Motor neuron (in vitro differentiated cells): ENCODE measurements at regions of chr10 and their contacts with region 1.

Region 1: GRCh38 chr10:97196223-97197029 is 10.7 kb upstream of the SLIT1 start:
- ATAC-seq: peak; percentile 73 to 93 (median 86)
- H3K4me3 ChIP-seq: peak overlapping the region; percentile 21 to 32 (median 26)
- H3K27ac ChIP-seq: peak overlapping the region in 1 of 2 donors; percentile 22
- H3K4me1 ChIP-seq: peaks cover 3 to 12% of the 10 kb centered on the region in 2 donors

Region 2: DNA sequence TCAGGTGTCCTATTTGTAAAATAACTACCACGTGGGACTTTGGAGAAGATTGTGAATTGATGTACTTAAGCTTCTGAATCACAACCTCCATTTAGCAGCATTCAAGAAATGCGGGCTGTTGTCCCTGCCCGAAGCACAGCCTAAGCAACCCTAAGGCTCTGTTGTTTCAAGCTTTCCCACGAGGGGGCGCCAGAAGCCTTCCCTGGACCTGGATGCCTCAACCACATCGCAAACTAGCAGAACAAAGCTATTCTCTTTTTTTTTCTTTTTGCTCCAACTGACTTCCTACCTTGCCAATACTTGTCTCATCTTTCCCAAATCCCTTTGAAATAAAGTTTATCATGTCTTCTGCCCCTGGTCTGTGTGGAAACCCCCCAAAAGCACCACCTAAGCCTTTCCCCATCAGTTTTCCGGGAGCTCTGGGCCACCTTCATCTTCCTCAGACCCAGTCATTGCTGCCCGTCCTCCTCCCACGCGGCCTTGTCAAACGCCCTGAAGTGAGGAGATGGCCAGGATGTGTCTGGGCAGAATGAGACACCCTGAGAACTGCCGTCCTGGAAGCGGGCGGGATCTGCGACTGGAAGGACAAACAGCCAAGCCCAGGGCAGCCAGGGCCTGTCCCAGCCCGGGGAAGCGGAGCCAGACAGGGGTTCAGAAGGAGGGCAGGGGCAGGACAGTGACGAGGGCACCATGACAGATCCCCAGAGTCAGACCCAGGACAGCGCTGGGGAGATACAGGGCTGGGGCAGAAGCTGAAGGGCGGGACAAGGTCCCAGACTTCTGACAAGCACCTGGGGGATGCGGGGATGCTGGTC is 123.4 kb before region 1 on chr10:
- in situ Hi-C with region 1: loop called in 7 of 9 experiments (anchors 10 to 25 kb)
- ATAC-seq: peak; percentile 77 to 96 (median 87)
- H3K4me3 ChIP-seq: no peak overlapping the region
- H3K27ac ChIP-seq: no peak overlapping the region
- H3K4me1 ChIP-seq: peaks cover 26 to 35% of the 10 kb centered on the region in 2 donors

Region 3: DNA sequence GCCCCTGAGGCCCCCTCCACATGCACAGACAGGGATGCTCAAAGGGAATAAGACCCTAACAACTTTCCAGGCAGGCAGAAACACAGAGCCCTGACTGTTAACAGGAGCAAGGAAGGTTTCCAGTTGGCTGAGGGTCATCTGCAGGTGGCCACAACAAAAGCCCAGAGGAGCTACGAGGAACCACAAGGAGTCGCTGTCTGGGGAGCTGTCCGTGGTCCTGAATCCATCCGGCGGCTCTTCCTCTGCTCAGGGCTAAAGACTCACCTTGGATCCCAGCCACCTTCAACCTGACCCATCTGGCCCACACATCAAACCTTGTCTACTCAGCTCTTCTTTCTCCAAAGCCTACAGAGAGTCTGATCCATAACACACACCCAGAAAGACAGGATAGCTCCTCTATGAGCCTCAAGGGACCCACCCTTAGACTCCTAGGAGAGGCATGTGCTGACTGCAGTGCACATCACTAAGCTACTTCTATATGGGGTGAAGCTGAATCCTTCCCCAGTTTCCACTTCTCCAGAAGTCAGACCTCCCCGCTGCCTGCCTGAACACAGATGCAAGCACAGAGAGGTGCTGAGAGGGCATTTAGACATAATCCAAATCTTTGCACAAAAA is 114.7 kb before region 1 on chr10:
- in situ Hi-C with region 1: loop called in 6 of 9 experiments (anchors 10 to 25 kb)
- ATAC-seq: peak in 6 of 8 experiments; percentile 39 to 96 (median 67)
- H3K4me3 ChIP-seq: no peak overlapping the region
- H3K27ac ChIP-seq: no peak overlapping the region
- H3K4me1 ChIP-seq: peaks cover 28 to 33% of the 10 kb centered on the region in 2 donors